Activated CD4-positive, alpha-beta T cell treated with anti-CD3 and anti-CD28 coated beads, Interleukin-2, amount 10 ng/mL, durations not matched to agents 24 days and 14 days (primary cell): ENCODE measurements at regions of chr19 and their contacts with region 1.

Region 1: DNA sequence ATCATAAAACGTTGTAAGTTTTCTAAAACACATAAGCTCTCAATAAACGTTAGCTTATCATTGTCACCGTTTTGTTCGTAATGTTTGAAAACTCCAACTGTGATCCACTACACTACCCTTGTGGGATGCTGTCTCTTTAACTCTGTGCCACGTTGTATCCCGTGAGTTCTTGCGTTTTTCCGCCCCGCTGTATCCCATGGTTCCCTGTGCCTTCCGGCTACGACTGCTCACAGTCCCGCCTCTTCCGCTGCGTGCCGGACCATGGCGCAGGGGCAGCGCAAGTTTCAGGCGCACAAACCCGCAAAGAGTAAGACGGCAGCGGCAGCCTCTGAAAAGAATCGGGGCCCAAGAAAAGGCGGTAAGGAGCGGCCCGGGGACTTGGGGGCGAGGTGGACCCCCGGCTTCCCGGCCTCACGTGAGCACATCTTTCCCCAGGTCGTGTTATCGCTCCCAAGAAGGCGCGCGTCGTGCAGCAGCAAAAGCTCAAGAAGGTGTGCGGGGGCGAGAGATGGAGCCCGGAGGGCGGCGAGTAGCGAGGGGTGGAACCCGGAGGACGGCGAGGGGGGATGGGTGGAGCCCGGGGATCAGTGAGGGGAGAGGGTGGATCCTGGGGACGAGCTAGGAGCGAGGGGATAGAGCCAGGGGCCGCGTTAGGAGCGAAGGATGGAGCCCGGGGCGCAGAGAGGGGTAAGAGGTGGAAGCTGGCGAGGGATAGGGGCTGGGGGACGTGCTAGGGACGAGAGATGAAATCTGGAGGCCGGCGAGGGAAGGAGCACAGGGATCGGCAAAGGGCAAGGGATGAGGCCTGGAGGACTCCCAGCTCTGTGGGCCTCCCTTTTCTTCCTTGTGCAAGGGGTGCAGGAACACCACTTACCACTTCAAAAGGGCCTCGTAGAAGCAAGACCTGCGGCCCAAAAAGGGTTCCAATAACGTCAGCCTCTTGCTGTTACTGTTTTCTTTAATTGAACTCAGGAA is at the start of gene C19orf53:
- DNase-seq: peak; percentile 98
- H3K4me3 Mint-ChIP-seq: peak within 1 kb of the TSS; percentile 99
- H3K27ac Mint-ChIP-seq: peak within 1 kb of the TSS; percentile 94
- H3K4me1 Mint-ChIP-seq: peaks cover 20% of the 10 kb centered on the region
- H3K27me3 Mint-ChIP-seq: no peaks in the 10 kb centered on the region
- total RNA-seq, gene C19orf53: 142 and 143 TPM in 2 replicates

Region 2: GRCh38 chr19:13574933-13575332 is 199.6 kb before region 1 on chr19:
- intact Hi-C with region 1: no loop called
- DNase-seq: no peak
- H3K4me3 Mint-ChIP-seq: no peak overlapping the region
- H3K27ac Mint-ChIP-seq: no peak overlapping the region
- H3K4me1 Mint-ChIP-seq: no peaks in the 10 kb centered on the region
- H3K27me3 Mint-ChIP-seq: peaks cover 3% of the 10 kb centered on the region

Region 3: GRCh38 chr19:13597640-13598039 is 176.9 kb before region 1 on chr19:
- intact Hi-C with region 1: loop called (anchors 10 kb)
- DNase-seq: peak; percentile 85
- H3K4me3 Mint-ChIP-seq: no peak overlapping the region
- H3K27ac Mint-ChIP-seq: no peak overlapping the region
- H3K4me1 Mint-ChIP-seq: peaks cover 2% of the 10 kb centered on the region
- H3K27me3 Mint-ChIP-seq: no peaks in the 10 kb centered on the region

Region 4: GRCh38 chr19:13665125-13665905 is 109.2 kb before region 1 on chr19:
- intact Hi-C with region 1: no loop called
- DNase-seq: no peak
- H3K4me3 Mint-ChIP-seq: no peak overlapping the region
- H3K27ac Mint-ChIP-seq: no peak overlapping the region
- H3K4me1 Mint-ChIP-seq: no peaks in the 10 kb centered on the region
- H3K27me3 Mint-ChIP-seq: no peaks in the 10 kb centered on the region

Region 5: GRCh38 chr19:13731147-13731964 is 43.1 kb before region 1 on chr19:
- intact Hi-C with region 1: loop called (anchors 2 kb)
- DNase-seq: peak; percentile 99
- H3K4me3 Mint-ChIP-seq: peak overlapping the region; percentile 89
- H3K27ac Mint-ChIP-seq: peak overlapping the region; percentile 95
- H3K4me1 Mint-ChIP-seq: peaks cover 19% of the 10 kb centered on the region
- H3K27me3 Mint-ChIP-seq: no peaks in the 10 kb centered on the region

Region 6: GRCh38 chr19:13747098-13747453 is 27.4 kb before region 1 on chr19:
- intact Hi-C with region 1: loop called (anchors 1 kb)
- DNase-seq: no peak
- H3K4me3 Mint-ChIP-seq: peak overlapping the region; percentile 92
- H3K27ac Mint-ChIP-seq: peak overlapping the region; percentile 92
- H3K4me1 Mint-ChIP-seq: peaks cover 17% of the 10 kb centered on the region
- H3K27me3 Mint-ChIP-seq: no peaks in the 10 kb centered on the region

Region 7: GRCh38 chr19:13794757-13795589 is 20.5 kb after region 1 on chr19 and contains the start of gene ZSWIM4:
- intact Hi-C with region 1: loop called (anchors 1 kb)
- DNase-seq: peak; percentile 99
- H3K4me3 Mint-ChIP-seq: peak within 1 kb of the TSS; percentile 98
- H3K27ac Mint-ChIP-seq: peak within 1 kb of the TSS; percentile 94
- H3K4me1 Mint-ChIP-seq: peaks cover 31% of the 10 kb centered on the region
- H3K27me3 Mint-ChIP-seq: no peaks in the 10 kb centered on the region
- total RNA-seq, gene ZSWIM4: 7.3 and 7.5 TPM in 2 replicates

Region 8: GRCh38 chr19:13880059-13881043 is 105.8 kb after region 1 on chr19:
- intact Hi-C with region 1: no loop called
- DNase-seq: peak; percentile 100
- H3K4me3 Mint-ChIP-seq: peak overlapping the region; percentile 70
- H3K27ac Mint-ChIP-seq: peak overlapping the region; percentile 89
- H3K4me1 Mint-ChIP-seq: peaks cover 34% of the 10 kb centered on the region
- H3K27me3 Mint-ChIP-seq: no peaks in the 10 kb centered on the region

Region 9: GRCh38 chr19:13902993-13903614 is 128.6 kb after region 1 on chr19:
- intact Hi-C with region 1: no loop called
- DNase-seq: peak; percentile 75
- H3K4me3 Mint-ChIP-seq: no peak overlapping the region
- H3K27ac Mint-ChIP-seq: no peak overlapping the region
- H3K4me1 Mint-ChIP-seq: peaks cover 15% of the 10 kb centered on the region
- H3K27me3 Mint-ChIP-seq: no peaks in the 10 kb centered on the region

Region 10: GRCh38 chr19:14073261-14073924 is 298.9 kb after region 1 on chr19:
- intact Hi-C with region 1: loop called (anchors 10 kb)
- DNase-seq: peak; percentile 94
- H3K4me3 Mint-ChIP-seq: peak overlapping the region; percentile 99
- H3K27ac Mint-ChIP-seq: peak overlapping the region; percentile 99
- H3K4me1 Mint-ChIP-seq: peaks cover 16% of the 10 kb centered on the region
- H3K27me3 Mint-ChIP-seq: peaks cover 6% of the 10 kb centered on the region